WTC11 (cell line): ENCODE measurements at regions of chr1 and their contacts with region 1.

Region 1: GRCh38 chr1:24930204-24931145 is at the start of gene RUNX3:
- DNase-seq: peak; percentile 74
- ATAC-seq: peak; percentile 45
- H3K4me3 Mint-ChIP-seq: peak within 1 kb of the TSS; percentile 71
- H3K27ac Mint-ChIP-seq: no peak within 1 kb of the TSS
- H3K4me1 Mint-ChIP-seq: peaks cover 68% of the 10 kb centered on the region
- H3K27me3 Mint-ChIP-seq: peaks cover 91% of the 10 kb centered on the region
- CTCF ChIP-seq: no peak
- total RNA-seq, gene RUNX3: 1.5 to 1.8 TPM (median 1.8 TPM) in 3 replicates

Region 2: GRCh38 chr1:24847995-24848881 is 82.2 kb before region 1 on chr1:
- CTCF ChIA-PET with region 1: interaction called, 25 read pairs
- POLR2A ChIA-PET with region 1: no interaction called
- DNase-seq: peak; percentile 97
- ATAC-seq: peak; percentile 88
- H3K4me3 Mint-ChIP-seq: peak overlapping the region; percentile 67
- H3K27ac Mint-ChIP-seq: no peak overlapping the region
- H3K4me1 Mint-ChIP-seq: 0 out of 2 replicates have a peak, but pooled peaks cover 3% of the 10 kb centered on the region
- H3K27me3 Mint-ChIP-seq: peaks cover 13% of the 10 kb centered on the region
- CTCF ChIP-seq: peak; percentile 83

Region 3: GRCh38 chr1:24909388-24909898 is 21.0 kb before region 1 on chr1:
- CTCF ChIA-PET with region 1: interaction called, 52 read pairs
- POLR2A ChIA-PET with region 1: interaction called, 3 read pairs
- DNase-seq: peak; percentile 89
- ATAC-seq: peak; percentile 94
- H3K4me3 Mint-ChIP-seq: peak overlapping the region; percentile 25; the same call in 1 of the 2 replicates
- H3K27ac Mint-ChIP-seq: peak overlapping the region; percentile 81
- H3K4me1 Mint-ChIP-seq: peaks cover 11% of the 10 kb centered on the region
- H3K27me3 Mint-ChIP-seq: no peaks in the 10 kb centered on the region
- CTCF ChIP-seq: 0 out of 2 replicates have a peak, but pooled peaks have one; percentile 18

Region 4: GRCh38 chr1:24970399-24970753 is 39.9 kb after region 1 on chr1:
- CTCF ChIA-PET with region 1: interaction called, 23 read pairs
- POLR2A ChIA-PET with region 1: interaction called, 8 read pairs
- DNase-seq: peak; percentile 52
- ATAC-seq: peak; percentile 72
- H3K4me3 Mint-ChIP-seq: no peak overlapping the region
- H3K27ac Mint-ChIP-seq: no peak overlapping the region
- H3K4me1 Mint-ChIP-seq: peaks cover 33% of the 10 kb centered on the region
- H3K27me3 Mint-ChIP-seq: peaks cover 3% of the 10 kb centered on the region
- CTCF ChIP-seq: no peak

Region 5: DNA sequence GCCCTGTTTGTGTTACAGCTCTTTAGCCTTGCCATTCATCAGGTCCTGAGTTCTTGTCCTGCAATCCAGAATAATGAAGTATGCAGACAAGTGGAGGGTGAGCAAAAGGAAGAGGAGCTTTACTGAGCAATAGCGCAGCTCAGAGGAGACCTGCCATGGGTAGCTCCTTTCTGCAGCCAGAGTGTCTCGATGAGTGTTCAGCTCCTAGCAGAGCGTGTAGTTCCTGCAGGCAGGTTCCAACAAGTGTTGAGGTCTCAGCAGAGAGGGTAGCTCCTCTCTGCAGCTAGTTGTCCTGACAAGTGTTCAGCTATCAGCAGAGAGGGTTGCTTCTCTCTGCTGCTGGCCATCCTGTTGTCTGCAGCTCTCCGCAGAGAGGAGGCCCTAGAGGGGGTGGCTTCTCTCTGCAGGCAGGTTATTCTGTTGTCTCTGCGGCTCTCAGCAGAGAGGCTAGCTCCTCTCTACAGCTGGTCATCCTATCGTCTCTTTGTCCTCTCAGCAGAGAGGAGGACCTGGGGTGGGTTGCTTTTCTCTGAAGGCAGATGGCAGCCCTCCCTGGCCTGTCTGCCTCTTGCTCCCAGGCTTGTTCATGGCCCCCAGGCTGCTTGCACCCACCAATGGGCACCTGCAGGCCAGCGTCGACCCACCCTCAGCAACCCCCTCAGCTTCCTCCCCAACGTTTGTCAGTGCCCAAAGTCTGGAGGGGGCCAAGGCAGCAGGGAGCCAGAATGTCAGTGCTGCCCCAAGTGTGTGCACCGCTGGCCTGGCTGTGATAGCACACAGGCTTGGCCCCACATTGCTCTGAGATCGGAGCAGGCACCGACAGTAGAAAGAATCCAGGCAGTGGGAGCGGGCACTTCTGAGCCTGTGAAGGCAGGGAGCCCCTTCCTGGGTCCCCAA is 112.1 kb after region 1 on chr1:
- CTCF ChIA-PET with region 1: interaction called, 27 read pairs
- POLR2A ChIA-PET with region 1: no interaction called
- DNase-seq: no peak
- ATAC-seq: no peak
- H3K4me3 Mint-ChIP-seq: no peak overlapping the region
- H3K27ac Mint-ChIP-seq: no peak overlapping the region
- H3K4me1 Mint-ChIP-seq: no peaks in the 10 kb centered on the region
- H3K27me3 Mint-ChIP-seq: no peaks in the 10 kb centered on the region
- CTCF ChIP-seq: no peak